Activated CD4-positive, alpha-beta memory T cell treated with anti-CD3 and anti-CD28 coated beads for 36 hours (primary cell): ENCODE measurements at regions of chr22 and their contacts with region 1.

Region 1: DNA sequence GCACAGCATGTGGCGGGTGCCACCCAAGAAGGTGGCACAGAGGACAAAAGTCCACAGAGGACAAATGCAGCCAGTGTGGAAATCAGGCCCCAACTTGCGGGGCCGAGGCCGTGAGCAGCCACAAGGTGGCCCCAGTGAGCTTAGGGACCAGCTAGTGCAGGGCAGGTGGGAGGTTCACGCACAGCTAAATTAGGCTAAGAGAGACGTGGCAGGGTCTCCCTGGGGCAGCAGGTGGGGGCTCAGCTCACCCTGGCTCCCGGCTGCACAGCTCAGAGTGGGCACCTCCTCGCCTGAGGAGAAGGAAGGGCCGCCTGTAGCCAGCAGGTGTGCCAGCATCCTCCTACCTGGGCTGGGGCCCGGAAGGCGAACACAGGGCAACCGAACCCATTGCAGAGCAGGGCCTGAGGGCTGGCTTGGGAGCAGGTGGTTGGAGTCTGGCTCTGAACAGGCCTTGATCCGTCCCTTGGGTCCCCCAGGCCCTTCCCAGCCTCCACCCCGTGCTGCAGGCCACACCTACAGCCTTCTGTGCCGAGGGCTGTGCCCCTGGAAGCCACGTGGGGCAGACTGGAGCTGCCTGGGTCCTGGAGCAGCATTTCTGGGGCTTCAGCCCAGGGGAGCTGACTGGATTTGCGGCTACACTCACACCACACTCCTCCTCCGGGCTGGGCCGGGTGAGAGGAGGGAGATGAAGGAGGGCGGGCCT is 26.1 kb upstream of the CELSR1 start:
- DNase-seq: peak; percentile 87
- H3K4me3 Mint-ChIP-seq: peak overlapping the region; percentile 28
- H3K27ac Mint-ChIP-seq: no peak overlapping the region
- H3K4me1 Mint-ChIP-seq: peaks cover 9% of the 10 kb centered on the region
- H3K27me3 Mint-ChIP-seq: no peaks in the 10 kb centered on the region

Region 2: DNA sequence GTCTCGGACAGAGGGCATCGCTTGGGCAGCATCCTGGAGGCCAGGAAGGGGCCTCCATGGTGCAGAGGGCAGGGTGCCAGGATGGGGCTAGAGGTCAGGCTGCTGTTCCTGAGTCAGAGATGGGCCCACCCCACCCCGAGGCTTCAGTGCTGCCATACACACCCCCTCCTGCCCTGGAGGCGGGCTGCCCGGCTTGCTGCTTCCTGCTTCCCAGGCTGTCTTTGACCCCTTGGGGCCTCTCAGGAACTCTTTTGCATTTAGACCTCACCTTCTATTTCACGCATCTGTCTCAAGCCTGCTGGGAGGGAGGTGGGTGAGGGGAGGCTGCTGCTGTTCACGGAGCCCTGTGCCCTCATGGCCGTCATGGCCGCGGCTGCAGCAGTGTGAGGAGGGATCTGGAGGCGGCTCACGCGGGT is 50.1 kb after region 1 on chr22:
- CTCF ChIA-PET with region 1: interaction called, 8 read pairs
- POLR2A ChIA-PET with region 1: no interaction called
- intact Hi-C with region 1: loop called (anchors 5 kb)
- DNase-seq: peak; percentile 64
- H3K4me3 Mint-ChIP-seq: peak overlapping the region; percentile 84
- H3K27ac Mint-ChIP-seq: peak overlapping the region; percentile 91
- H3K4me1 Mint-ChIP-seq: peaks cover 26% of the 10 kb centered on the region
- H3K27me3 Mint-ChIP-seq: no peaks in the 10 kb centered on the region

Region 3: DNA sequence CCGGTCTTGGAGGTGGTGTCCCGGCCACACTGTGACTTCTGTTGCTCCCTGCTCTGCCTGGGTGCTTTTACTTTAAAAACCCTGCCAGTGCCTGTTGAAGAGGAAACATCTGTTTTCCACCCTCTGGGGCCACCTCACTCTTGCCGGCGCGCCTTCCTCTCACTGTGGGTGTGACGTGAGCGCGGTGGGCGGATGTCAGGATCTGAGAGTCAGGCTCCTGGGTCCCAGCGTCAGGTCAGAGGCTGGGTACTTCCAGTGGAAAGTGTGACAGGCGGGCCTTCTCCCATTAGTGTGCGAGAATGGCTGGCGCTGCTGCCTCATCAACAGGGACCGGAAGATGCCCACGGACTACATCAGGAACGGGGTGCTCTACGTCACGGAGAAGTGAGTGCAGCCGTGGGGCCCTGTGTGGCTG is 110.8 kb after region 1 on chr22:
- CTCF ChIA-PET with region 1: interaction called, 10 read pairs
- POLR2A ChIA-PET with region 1: no interaction called
- intact Hi-C with region 1: loop called (anchors 5 kb)
- DNase-seq: peak; percentile 99
- H3K4me3 Mint-ChIP-seq: peak overlapping the region; percentile 87
- H3K27ac Mint-ChIP-seq: peak overlapping the region; percentile 98
- H3K4me1 Mint-ChIP-seq: peaks cover 45% of the 10 kb centered on the region
- H3K27me3 Mint-ChIP-seq: no peaks in the 10 kb centered on the region

Region 4: GRCh38 chr22:46737976-46738646 is 174.6 kb after region 1 on chr22 and contains the start of gene CERK:
- CTCF ChIA-PET with region 1: interaction called, 13 read pairs
- POLR2A ChIA-PET with region 1: no interaction called
- intact Hi-C with region 1: loop called (anchors 5 kb)
- DNase-seq: peak; percentile 72
- H3K4me3 Mint-ChIP-seq: peak within 1 kb of the TSS; percentile 96
- H3K27ac Mint-ChIP-seq: peak within 1 kb of the TSS; percentile 93
- H3K4me1 Mint-ChIP-seq: peaks cover 33% of the 10 kb centered on the region
- H3K27me3 Mint-ChIP-seq: no peaks in the 10 kb centered on the region
- total RNA-seq, gene CERK: 54.4 to 55.0 TPM

Region 5: DNA sequence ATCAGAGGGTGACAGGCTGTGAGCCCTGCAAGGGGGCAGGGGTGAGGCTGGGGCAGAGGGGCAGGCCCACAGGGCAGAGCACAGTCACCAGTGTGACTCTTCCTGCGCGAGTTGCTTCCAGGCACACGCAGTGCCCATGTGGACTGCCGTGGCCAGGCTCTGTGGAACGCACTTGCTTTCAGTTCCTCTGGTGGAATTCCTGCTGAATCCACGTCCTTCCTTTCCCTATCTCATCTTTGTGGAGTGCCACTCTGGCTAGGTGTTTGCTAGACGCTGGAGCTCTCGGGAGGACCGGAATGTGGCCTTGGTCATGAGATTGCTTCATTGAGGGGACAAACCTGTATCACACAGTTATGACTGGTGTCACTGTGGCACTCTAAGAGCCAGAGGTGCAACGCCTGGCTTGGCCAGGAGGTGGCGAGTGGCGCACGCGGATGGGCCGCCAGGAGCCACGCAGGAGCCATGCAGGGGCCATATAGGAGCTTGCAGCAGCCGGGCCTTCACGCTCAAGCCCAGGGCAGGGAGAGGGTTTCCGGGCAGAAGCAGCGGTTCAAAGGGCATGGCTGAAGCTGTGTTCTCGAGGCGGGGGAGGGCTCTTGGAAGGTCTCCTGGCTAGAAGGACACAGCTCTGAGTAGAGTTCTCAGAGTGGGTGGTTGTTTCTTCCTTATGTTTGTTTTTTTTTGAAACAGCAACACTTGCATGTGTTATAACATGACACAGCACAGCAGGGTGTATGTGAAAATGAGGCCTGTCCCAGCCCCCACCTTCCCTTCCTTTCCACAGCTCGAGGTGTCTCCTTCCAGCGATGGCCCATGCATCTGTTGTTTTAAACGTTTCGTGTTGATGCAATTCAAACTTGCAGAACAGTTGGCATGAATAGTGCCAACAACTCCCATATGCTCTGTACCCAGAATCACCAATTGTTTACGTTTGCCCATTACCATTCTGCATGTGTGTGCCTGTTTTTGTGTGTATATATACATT is 235.1 kb after region 1 on chr22:
- CTCF ChIA-PET with region 1: interaction called, 24 read pairs
- POLR2A ChIA-PET with region 1: no interaction called
- intact Hi-C with region 1: loop called (anchors 10 kb)
- DNase-seq: peak; percentile 85
- H3K4me3 Mint-ChIP-seq: no peak overlapping the region
- H3K27ac Mint-ChIP-seq: peak overlapping the region; percentile 4
- H3K4me1 Mint-ChIP-seq: peaks cover 21% of the 10 kb centered on the region
- H3K27me3 Mint-ChIP-seq: no peaks in the 10 kb centered on the region